ENCODE measurements at regions of chr3 and their contacts with region 1.

Region 1: GRCh38 chr3:171566803-171567422 is 106.7 kb upstream of the TNIK start:
- DNase-seq: no peak
- H3K4me3 ChIP-seq: no peak overlapping the region
- H3K27ac ChIP-seq: no peak overlapping the region
- H3K4me1 ChIP-seq: no peaks in the 10 kb centered on the region
- H3K27me3 ChIP-seq: no peaks in the 10 kb centered on the region
- CTCF ChIP-seq: peak; percentile 58 to 79 (median 70)
- EP300 ChIP-seq: no peak
- POLR2A ChIP-seq: no peak

Region 2: GRCh38 chr3:170961616-170962400 is 605.1 kb before region 1 on chr3:
- intact Hi-C with region 1: loop called (anchors 1 kb)
- DNase-seq: no peak
- H3K4me3 ChIP-seq: no peak overlapping the region
- H3K27ac ChIP-seq: no peak overlapping the region
- H3K4me1 ChIP-seq: peaks cover 0 to 7% (median 3%) of the 10 kb centered on the region in 4 donors
- H3K27me3 ChIP-seq: no peaks in the 10 kb centered on the region
- CTCF ChIP-seq: peak; percentile 7 to 58 (median 46)
- EP300 ChIP-seq: no peak
- POLR2A ChIP-seq: no peak

Region 3: GRCh38 chr3:171049861-171050444 is 517.0 kb before region 1 on chr3:
- intact Hi-C with region 1: loop called (anchors 1 kb)
- DNase-seq: no peak
- H3K4me3 ChIP-seq: no peak overlapping the region
- H3K27ac ChIP-seq: no peak overlapping the region
- H3K4me1 ChIP-seq: no peaks in the 10 kb centered on the region
- H3K27me3 ChIP-seq: no peaks in the 10 kb centered on the region
- CTCF ChIP-seq: peak in 2 of 4 experiments; percentile 34 to 50
- EP300 ChIP-seq: no peak
- POLR2A ChIP-seq: no peak

Region 4: DNA sequence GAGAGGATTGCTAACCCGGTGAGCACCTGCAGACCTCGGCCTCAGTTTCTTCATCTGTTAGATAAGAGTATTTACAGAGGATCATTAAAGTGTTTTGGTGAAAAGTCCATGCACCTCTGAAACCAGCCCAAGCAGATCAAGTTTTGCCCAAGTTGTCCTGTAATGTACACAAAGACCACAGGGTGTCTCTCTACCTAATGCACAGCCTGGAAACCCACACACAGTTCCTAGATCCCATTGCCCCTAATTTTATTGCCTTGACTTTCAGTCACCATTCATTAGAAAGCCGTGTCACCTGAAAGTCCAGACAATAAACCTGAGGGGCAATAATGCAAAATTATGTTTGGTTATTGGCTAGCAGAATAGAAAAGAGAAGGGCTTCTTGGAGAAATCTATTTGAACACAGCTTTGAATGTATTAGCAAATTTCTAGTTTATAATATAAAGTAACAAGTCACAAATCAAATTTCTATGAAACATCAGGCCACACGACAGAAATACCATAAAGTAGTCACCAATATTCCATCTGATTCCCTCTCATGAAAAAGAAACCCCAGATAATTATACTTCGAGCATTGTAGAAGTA is 379.1 kb before region 1 on chr3:
- intact Hi-C with region 1: loop called (anchors 5 kb)
- DNase-seq: no peak
- H3K4me3 ChIP-seq: no peak overlapping the region
- H3K27ac ChIP-seq: no peak overlapping the region
- H3K4me1 ChIP-seq: peaks cover 0 to 20% (median 17%) of the 10 kb centered on the region in 4 donors
- H3K27me3 ChIP-seq: no peaks in the 10 kb centered on the region
- CTCF ChIP-seq: peak; percentile 37 to 53 (median 48)
- EP300 ChIP-seq: no peak
- POLR2A ChIP-seq: no peak

Measured in sigmoid colon (tissue), 7 donors.